Activated CD4-positive, alpha-beta memory T cell treated with anti-CD3 and anti-CD28 coated beads for 36 hours (primary cell): ENCODE measurements at regions of chr12 and their contacts with region 1.

Region 1: GRCh38 chr12:44930972-44931600 is 55.0 kb upstream of the NELL2 start:
- DNase-seq: no peak
- H3K4me3 Mint-ChIP-seq: no peak overlapping the region
- H3K27ac Mint-ChIP-seq: no peak overlapping the region
- H3K4me1 Mint-ChIP-seq: no peaks in the 10 kb centered on the region
- H3K27me3 Mint-ChIP-seq: no peaks in the 10 kb centered on the region

Region 2: DNA sequence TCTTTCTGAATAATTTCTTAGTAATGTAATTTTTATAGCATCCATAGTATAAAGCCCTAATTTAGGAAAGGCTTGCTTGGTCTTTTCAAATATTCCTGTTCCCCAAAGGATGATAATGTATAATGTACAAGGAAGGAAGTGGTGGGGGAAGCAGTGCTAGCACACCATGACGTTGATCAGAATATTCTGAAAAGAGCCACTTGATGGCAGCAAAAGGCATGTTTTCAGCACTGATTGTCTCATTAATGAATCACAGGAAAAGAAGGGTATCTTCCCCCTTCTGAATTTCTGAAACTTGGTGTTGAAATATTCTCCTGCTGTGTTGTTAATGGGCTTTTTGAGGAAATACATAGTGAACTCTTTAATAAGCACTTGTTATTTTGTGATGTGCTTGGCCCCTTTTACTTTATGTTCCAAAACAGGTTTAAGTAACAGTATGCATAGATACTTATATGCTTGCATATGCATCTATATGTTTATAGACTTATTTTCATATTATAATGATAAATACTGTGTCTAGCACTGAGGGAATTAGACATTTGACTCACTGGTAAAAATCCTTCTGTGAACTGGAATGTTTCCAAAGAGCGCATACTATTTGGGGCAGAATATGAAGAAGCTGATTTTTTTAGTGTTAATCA is 973.2 kb before region 1 on chr12:
- CTCF ChIA-PET with region 1: interaction called, 5 read pairs
- POLR2A ChIA-PET with region 1: no interaction called
- intact Hi-C with region 1: loop called (anchors 5 kb)
- DNase-seq: peak; percentile 10
- H3K4me3 Mint-ChIP-seq: no peak overlapping the region
- H3K27ac Mint-ChIP-seq: no peak overlapping the region
- H3K4me1 Mint-ChIP-seq: peaks cover 10% of the 10 kb centered on the region
- H3K27me3 Mint-ChIP-seq: no peaks in the 10 kb centered on the region

Region 3: DNA sequence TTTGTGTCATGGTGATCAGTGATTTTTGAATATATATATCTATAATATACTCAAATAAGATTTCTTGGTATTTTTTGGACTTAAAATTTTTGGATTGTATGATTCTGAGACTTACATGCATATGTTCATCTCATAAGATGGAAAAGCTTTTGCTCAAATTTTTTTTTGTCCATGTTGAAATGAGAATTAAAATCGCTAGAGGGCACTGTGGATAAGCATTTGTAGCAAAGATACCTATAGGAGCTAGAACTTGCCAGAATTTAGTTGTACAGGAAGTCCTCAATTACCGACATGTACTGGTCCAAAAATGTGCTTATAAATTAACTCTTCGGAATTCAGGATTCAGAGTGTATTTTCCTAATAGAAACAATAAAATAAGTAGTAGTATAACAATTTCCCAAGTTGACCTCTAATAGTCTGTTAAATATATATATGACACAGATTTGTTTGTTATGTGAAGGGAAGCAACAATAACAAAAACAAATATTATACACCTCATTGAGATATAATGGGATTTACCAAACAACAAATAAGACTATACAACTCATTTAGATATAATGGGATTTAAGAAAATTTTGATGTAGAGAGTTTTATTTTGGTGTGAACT is 915.6 kb before region 1 on chr12:
- CTCF ChIA-PET with region 1: interaction called, 32 read pairs
- POLR2A ChIA-PET with region 1: no interaction called
- intact Hi-C with region 1: loop called (anchors 1 kb)
- DNase-seq: no peak
- H3K4me3 Mint-ChIP-seq: no peak overlapping the region
- H3K27ac Mint-ChIP-seq: no peak overlapping the region
- H3K4me1 Mint-ChIP-seq: no peaks in the 10 kb centered on the region
- H3K27me3 Mint-ChIP-seq: no peaks in the 10 kb centered on the region

Region 4: DNA sequence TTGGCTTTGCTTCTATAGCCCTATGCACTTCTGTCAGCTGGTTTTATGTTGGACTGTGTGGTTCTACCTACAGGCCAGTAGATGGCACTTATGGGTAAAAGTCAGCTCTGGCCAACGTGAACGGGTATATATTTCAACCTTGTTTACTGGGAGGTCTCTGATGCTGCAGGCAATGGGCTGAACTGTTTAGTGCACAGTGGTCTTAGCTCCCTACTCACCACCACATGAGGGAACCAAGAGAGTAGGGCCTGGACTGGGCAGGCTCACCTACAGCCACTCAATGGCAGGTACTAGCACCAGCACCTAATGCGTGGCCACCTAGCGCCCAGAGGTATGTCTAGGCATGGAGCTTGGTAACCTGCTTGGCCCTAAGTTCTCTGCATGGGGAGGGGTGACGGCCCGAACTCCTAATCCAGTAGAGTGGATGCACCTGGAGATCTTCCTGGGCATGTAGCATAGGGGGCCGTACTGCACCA is 613.4 kb before region 1 on chr12:
- CTCF ChIA-PET with region 1: interaction called, 3 read pairs
- POLR2A ChIA-PET with region 1: no interaction called
- intact Hi-C with region 1: loop called (anchors 1 kb)
- DNase-seq: no peak
- H3K4me3 Mint-ChIP-seq: no peak overlapping the region
- H3K27ac Mint-ChIP-seq: no peak overlapping the region
- H3K4me1 Mint-ChIP-seq: no peaks in the 10 kb centered on the region
- H3K27me3 Mint-ChIP-seq: no peaks in the 10 kb centered on the region

Region 5: DNA sequence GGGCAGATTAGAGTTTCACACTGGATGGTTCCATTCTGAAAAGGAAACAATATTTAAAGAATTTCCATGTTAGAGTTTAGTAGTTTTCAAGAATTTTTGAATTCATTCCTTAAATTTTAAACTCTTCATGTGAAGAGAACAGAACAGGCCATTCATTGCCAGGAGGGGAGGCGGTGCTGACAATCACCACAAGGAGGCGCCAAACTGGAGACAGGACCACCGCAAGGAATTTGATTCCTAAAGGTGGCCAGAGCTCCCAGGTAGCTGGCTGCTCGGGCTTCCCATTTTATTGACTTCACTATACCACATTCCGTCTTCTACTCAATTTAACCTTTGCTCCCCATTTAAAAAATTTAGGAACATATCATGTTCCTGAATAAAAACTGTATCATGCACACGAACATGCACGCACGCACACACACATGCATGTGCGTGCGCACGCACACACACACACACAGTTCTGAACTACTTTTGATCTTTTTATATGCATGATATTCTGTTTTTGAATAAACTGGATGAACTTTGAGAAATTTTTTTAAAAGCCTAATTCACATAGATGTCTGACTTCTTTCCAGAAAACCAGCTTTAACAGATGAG is 156.2 kb before region 1 on chr12:
- CTCF ChIA-PET with region 1: interaction called, 64 read pairs
- POLR2A ChIA-PET with region 1: no interaction called
- intact Hi-C with region 1: loop called (anchors 1 kb)
- DNase-seq: peak; percentile 71
- H3K4me3 Mint-ChIP-seq: no peak overlapping the region
- H3K27ac Mint-ChIP-seq: no peak overlapping the region
- H3K4me1 Mint-ChIP-seq: peaks cover 5% of the 10 kb centered on the region
- H3K27me3 Mint-ChIP-seq: no peaks in the 10 kb centered on the region

Region 6: GRCh38 chr12:44812062-44812461 is 119.0 kb before region 1 on chr12:
- CTCF ChIA-PET with region 1: interaction called, 66 read pairs
- POLR2A ChIA-PET with region 1: no interaction called
- intact Hi-C with region 1: loop called (anchors 1 kb)
- DNase-seq: no peak
- H3K4me3 Mint-ChIP-seq: no peak overlapping the region
- H3K27ac Mint-ChIP-seq: no peak overlapping the region
- H3K4me1 Mint-ChIP-seq: peaks cover 35% of the 10 kb centered on the region
- H3K27me3 Mint-ChIP-seq: no peaks in the 10 kb centered on the region

Region 7: DNA sequence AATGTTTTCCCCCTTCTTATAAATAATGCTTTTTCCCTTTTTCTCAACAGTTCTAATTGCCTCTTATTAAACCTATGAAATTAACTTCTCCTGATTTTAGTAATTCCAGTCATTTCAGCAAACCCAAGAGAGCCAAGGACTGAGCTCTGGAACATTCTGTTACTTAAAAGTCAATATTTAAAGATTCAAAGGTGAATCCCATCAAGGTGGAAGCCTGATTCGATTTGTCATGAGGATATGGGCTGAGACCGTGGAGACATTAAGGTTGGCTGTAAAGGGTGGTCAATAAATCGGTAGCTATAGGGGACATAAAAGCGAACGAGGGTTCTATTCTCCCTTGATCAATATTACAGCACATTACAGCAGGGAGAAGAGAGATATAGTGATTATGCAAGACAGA is 11.6 kb after region 1 on chr12:
- CTCF ChIA-PET with region 1: interaction called, 11 read pairs
- POLR2A ChIA-PET with region 1: no interaction called
- intact Hi-C with region 1: no loop called
- DNase-seq: no peak
- H3K4me3 Mint-ChIP-seq: no peak overlapping the region
- H3K27ac Mint-ChIP-seq: no peak overlapping the region
- H3K4me1 Mint-ChIP-seq: no peaks in the 10 kb centered on the region
- H3K27me3 Mint-ChIP-seq: peaks cover 1% of the 10 kb centered on the region

Region 8: GRCh38 chr12:45089411-45090115 is 158.5 kb after region 1 on chr12:
- CTCF ChIA-PET with region 1: no interaction called
- POLR2A ChIA-PET with region 1: no interaction called
- intact Hi-C with region 1: no loop called
- DNase-seq: no peak
- H3K4me3 Mint-ChIP-seq: no peak overlapping the region
- H3K27ac Mint-ChIP-seq: no peak overlapping the region
- H3K4me1 Mint-ChIP-seq: no peaks in the 10 kb centered on the region
- H3K27me3 Mint-ChIP-seq: peaks cover 14% of the 10 kb centered on the region